SK-N-SH (cell line): ENCODE measurements at regions of chr6 and their contacts with region 1.

Region 1: DNA sequence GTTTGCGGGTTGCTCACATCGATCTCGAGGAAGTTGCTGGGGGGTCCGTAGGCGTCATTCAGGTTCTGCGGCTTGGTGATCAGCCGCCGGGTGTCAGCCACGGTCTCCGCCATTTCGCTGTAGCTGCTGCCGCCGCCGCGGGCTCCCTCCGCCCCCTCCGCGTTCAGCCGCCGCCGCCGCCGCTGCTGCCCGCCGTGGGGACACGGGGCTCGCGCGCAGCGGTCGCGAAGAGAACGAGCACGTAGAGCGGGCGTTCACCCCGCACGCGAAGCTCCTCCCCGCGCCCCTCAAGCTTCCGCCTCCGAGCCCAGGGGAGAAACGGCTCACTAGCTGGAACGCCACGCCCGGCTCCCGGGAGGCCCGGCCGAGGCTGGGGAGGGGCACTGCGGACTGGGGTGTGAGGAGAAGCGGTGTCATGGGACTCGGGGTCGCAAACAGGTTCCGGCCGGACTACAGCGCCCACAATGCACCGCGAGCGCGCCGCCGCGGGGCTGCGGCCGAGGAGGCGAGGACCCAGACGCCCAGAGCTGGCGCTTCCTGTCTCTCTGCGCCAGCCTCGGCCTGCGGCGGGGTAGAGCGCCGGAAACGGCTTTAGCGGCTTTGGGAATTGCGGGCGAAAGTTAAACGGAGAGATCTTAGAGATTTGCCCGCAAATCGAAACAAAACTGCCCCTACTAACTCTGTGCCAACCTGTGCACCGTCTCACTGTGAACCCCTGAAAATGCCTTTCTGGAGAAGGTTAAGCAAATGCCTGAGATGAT is at the start of gene SNX3:
- DNase-seq: peak; percentile 98
- H3K4me3 ChIP-seq: peak within 1 kb of the TSS; percentile 83 to 99
- H3K27ac ChIP-seq: peak within 1 kb of the TSS; percentile 85 to 95
- H3K4me1 ChIP-seq: peaks cover 5 to 8% of the 10 kb centered on the region in 2 experiments
- H3K27me3 ChIP-seq: no peaks in the 10 kb centered on the region
- CTCF ChIP-seq: 0 out of 2 replicates have a peak, but pooled peaks have one; percentile 19
- EP300 ChIP-seq: peak in 1 of 2 experiments; percentile 17; a peak in 1 of 4 replicates
- RAD21 ChIP-seq: no peak
- polyA plus RNA-seq, gene SNX3: 105 and 124 TPM in 2 replicates

Region 2: DNA sequence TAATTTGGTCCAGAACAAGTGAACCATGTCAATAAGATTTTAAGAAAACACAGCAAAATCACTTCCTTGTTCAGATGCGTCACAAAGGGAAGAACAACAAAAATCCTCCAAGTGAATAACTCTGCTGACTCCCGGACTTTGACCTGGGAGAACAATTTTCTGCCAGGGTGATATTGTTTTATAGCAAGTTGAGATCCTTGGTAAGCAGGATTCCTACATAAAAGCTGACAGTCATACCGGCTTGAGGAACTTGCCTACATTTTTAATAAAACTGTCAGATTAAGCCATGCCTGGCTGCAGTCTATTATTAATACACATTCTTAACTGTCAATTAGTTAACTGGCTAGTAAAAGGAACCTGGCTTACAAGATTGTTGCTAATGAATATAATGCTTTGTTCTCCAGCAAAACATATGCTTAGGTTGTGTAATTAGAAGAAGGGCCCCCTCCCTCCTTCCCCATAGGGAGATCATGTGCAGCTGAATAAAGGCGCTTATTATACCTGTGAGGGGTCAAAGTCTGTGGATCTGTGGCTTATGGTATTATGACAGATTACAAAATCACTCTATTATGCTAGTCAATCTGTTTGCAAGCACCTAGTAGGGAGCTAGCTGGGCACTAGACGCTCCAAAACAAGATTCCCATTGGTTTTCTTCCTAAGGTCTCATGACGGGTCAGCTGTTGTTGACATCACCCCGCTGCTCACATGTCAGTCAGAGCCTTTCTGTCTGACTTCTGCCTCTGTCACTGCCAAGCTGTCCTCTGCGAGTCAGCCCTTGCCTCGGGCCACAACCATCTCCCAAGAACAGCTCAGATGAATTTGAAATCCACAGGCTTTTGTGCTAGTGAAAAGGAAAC is 258.4 kb before region 1 on chr6:
- CTCF ChIA-PET with region 1: no interaction called
- POLR2A ChIA-PET with region 1: no interaction called
- DNase-seq: no peak
- H3K4me3 ChIP-seq: no peak overlapping the region
- H3K27ac ChIP-seq: no peak overlapping the region
- H3K4me1 ChIP-seq: no peaks in the 10 kb centered on the region; a peak in 1 of 4 replicates
- H3K27me3 ChIP-seq: no peaks in the 10 kb centered on the region
- CTCF ChIP-seq: no peak
- EP300 ChIP-seq: no peak
- RAD21 ChIP-seq: no peak

Region 3: DNA sequence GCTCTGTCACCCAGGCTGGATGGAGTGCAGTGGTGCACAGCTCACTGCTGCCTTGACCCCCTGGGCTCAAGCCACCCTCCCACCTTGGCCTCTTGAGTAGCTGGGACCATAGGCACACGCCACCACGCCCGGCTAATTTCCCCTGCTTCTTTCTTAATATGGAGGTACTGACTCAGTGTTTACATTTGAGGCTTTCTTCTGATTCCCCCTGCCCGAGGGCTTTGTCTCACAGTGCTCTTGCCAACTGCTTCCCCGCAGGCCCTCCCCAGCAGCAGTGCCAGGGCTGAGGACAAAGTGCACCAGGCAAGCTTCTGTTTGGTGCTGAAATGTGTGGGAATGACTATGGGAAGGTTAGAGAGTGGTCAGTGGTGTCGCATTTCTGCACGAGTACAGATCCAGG is 60.4 kb before region 1 on chr6:
- CTCF ChIA-PET with region 1: no interaction called
- POLR2A ChIA-PET with region 1: no interaction called
- DNase-seq: no peak
- H3K4me3 ChIP-seq: no peak overlapping the region
- H3K27ac ChIP-seq: no peak overlapping the region
- H3K4me1 ChIP-seq: no peaks in the 10 kb centered on the region
- H3K27me3 ChIP-seq: no peaks in the 10 kb centered on the region
- CTCF ChIP-seq: no peak
- EP300 ChIP-seq: no peak
- RAD21 ChIP-seq: no peak

Region 4: GRCh38 chr6:108247954-108248536 is 12.9 kb before region 1 on chr6:
- CTCF ChIA-PET with region 1: interaction called, 10 read pairs
- POLR2A ChIA-PET with region 1: interaction called, 4 read pairs
- DNase-seq: peak; percentile 64
- H3K4me3 ChIP-seq: no peak overlapping the region
- H3K27ac ChIP-seq: peak overlapping the region in 1 of 2 experiments; percentile 58; a peak in 2 of 4 replicates
- H3K4me1 ChIP-seq: peaks cover 0 to 8% of the 10 kb centered on the region in 2 experiments; a peak in 2 of 4 replicates
- H3K27me3 ChIP-seq: no peaks in the 10 kb centered on the region
- CTCF ChIP-seq: no peak
- EP300 ChIP-seq: peak in 1 of 2 experiments; percentile 93; a peak in 2 of 4 replicates
- RAD21 ChIP-seq: peak; percentile 53

Region 5: DNA sequence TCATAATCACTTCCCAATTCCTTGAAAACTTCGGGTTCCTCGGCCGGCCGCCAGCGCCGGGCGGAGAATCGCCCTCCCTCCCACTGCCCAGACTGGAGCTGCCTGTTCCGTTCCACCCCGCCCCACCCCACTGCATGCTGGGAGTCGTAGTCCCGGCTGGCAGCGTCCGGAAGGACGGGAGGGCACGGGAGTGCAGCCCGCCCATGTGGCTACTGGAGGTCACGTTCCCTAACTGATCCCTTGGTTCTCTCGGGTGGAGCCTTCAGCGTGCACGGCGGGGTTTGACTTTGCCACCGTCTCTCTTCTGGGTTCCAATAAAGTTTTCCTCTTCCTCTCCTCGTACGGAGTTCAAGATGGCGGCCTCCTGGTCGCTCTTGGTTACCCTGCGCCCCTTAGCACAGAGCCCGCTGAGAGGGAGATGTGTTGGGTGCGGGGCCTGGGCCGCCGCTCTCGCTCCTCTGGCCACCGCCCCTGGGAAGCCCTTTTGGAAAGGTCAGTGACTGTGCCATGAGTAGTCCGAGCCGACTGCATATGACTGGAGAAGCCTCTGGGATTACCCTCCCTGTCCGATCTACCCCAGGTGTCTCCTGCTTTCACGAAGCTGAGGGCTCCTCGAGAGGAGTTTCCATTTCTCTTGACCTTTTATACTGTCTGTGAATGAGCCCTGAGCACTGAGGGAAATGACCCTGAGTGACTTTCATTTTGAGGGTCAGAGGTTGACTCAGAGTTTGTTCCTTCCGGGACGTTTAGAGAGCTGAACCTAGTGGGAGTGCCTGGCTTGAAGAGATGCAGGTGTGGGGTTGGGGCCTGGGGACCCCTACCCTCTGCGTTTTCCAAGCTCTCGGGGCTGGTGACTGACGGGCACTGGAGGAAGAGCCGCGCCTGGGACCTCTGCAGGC is 34.0 kb after region 1 on chr6 and contains the start of gene AFG1L:
- CTCF ChIA-PET with region 1: interaction called, 4 read pairs
- POLR2A ChIA-PET with region 1: interaction called, 12 read pairs
- DNase-seq: peak; percentile 93
- H3K4me3 ChIP-seq: peak within 1 kb of the TSS; percentile 62 to 74
- H3K27ac ChIP-seq: peak within 1 kb of the TSS; percentile 87 to 97
- H3K4me1 ChIP-seq: no peaks in the 10 kb centered on the region; a peak in 2 of 4 replicates
- H3K27me3 ChIP-seq: no peaks in the 10 kb centered on the region
- CTCF ChIP-seq: no peak
- EP300 ChIP-seq: no peak; a peak in 1 of 4 replicates
- RAD21 ChIP-seq: no peak
- polyA plus RNA-seq, gene AFG1L: 0.71 and 0.93 TPM in 2 replicates